HepG2 (cell line): ENCODE measurements at regions of chr20 and their contacts with region 1.

Region 1: GRCh38 chr20:36629719-36630681 is 16.0 kb downstream of the SLA2 start:
- DNase-seq: no peak
- ATAC-seq: no peak
- H3K4me3 ChIP-seq: no peak overlapping the region
- H3K27ac ChIP-seq: no peak overlapping the region
- H3K4me1 ChIP-seq: peaks cover 37% of the 10 kb centered on the region
- H3K27me3 ChIP-seq: no peaks in the 10 kb centered on the region
- CTCF ChIP-seq: no peak
- EP300 ChIP-seq: no peak
- POLR2A ChIP-seq: no peak
- RAD21 ChIP-seq: no peak

Region 2: DNA sequence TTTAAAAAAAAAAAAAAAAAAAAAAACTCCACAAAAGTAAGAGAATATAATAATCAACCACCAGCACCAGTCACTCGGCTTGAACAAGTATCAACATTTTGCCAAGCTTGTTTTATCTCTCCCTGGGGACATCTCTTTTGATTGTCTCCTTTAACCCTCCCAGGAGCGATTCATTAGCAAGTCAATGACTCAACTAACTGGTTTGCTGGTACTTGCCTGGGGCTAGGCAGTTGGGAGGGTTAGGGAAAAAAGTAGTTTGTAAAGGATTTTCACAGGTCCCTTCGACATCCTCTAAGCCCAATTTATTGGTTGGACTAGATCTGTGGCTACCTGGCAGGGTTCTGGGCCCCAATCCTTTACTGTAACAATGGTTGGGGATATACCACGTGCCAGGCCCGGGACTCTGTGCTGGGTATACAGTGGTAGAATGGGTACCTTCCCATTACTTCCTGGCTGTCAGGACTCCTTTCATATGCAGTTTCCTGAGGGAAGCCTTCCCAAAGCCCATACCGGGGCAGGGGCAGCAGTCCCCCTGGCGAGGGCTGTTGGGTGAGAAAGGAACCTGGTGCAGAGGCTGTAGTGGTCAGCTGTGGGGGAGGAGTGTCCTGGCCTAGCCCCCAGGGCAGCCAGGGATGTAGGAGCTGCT is 44.4 kb before region 1 on chr20:
- CTCF ChIA-PET with region 1: no interaction called
- POLR2A ChIA-PET with region 1: no interaction called
- in situ Hi-C with region 1: no loop called
- intact Hi-C with region 1: no loop called
- DNase-seq: no peak
- ATAC-seq: peak; percentile 6; the same call in 1 of the 3 replicates
- H3K4me3 ChIP-seq: no peak overlapping the region
- H3K27ac ChIP-seq: no peak overlapping the region
- H3K4me1 ChIP-seq: no peaks in the 10 kb centered on the region
- H3K27me3 ChIP-seq: no peaks in the 10 kb centered on the region
- CTCF ChIP-seq: no peak
- EP300 ChIP-seq: no peak
- POLR2A ChIP-seq: no peak
- RAD21 ChIP-seq: no peak

Region 3: GRCh38 chr20:36613974-36614373 is 16.0 kb before region 1 on chr20:
- CTCF ChIA-PET with region 1: interaction called, 20 read pairs
- POLR2A ChIA-PET with region 1: interaction called, 52 read pairs
- in situ Hi-C with region 1: no loop called
- intact Hi-C with region 1: loop called (anchors 1 kb)
- DNase-seq: no peak
- ATAC-seq: peak; percentile 8
- H3K4me3 ChIP-seq: no peak overlapping the region
- H3K27ac ChIP-seq: no peak overlapping the region
- H3K4me1 ChIP-seq: no peaks in the 10 kb centered on the region
- H3K27me3 ChIP-seq: no peaks in the 10 kb centered on the region
- CTCF ChIP-seq: no peak
- EP300 ChIP-seq: no peak
- POLR2A ChIP-seq: peak in 1 of 2 experiments; percentile 38; a peak in 2 of 4 replicates
- RAD21 ChIP-seq: no peak

Region 4: DNA sequence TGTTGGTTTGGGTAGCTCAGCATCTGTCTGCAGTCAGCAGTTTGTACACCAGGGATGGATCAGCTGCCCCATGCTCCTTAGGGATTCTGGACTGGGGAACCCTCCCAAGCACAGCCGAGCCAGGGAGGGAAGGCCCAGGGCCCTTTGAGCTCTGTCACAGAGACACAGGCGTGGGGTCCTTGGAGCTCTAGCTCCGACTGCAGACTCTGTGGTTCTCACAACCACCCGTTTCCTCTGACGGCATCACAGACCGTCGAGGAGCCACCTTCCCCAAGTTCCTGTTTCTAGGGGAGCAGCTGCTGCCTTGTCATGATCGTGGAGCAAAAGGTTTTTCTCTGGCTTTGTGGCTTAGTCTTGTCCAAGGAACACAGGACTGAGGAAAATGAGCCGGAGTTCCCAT is 16.0 kb after region 1 on chr20 and contains the start of gene SLA2:
- CTCF ChIA-PET with region 1: no interaction called
- POLR2A ChIA-PET with region 1: interaction called, 15 read pairs
- in situ Hi-C with region 1: no loop called
- intact Hi-C with region 1: no loop called
- DNase-seq: no peak
- ATAC-seq: no peak
- H3K4me3 ChIP-seq: no peak within 1 kb of the TSS
- H3K27ac ChIP-seq: peak within 1 kb of the TSS; percentile 59
- H3K4me1 ChIP-seq: peaks cover 82% of the 10 kb centered on the region
- H3K27me3 ChIP-seq: no peaks in the 10 kb centered on the region
- CTCF ChIP-seq: no peak
- EP300 ChIP-seq: no peak
- POLR2A ChIP-seq: no peak
- RAD21 ChIP-seq: no peak
- total RNA-seq, gene SLA2: 1.6 and 1.8 TPM in 2 replicates